ENCODE measurements at regions of chr19 and their contacts with region 1.

Region 1: DNA sequence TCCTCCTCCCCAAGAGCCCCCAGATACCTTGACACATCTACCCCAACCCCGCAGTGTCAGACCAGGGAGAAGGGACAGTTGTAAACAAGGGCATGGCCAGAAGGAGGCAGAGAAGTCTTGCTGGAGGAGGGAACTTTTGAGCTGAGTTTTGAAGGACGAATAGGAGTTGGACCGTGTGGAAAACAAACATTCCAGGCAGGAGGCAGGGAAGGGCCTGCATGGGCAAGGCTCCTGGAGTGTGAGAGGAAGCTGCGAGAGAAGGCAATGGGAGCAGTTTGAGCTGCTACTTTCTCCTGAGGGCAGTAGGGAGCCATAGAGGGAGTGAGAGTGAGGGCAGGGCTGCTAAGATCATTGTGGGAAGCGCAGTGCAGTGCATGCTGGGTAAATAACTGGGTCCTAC is 23.3 kb downstream of the IL12RB1 start:
- DNase-seq: no peak
- ATAC-seq: peak; percentile 59
- H3K4me3 ChIP-seq: no peak overlapping the region
- H3K27ac ChIP-seq: no peak overlapping the region
- H3K4me1 ChIP-seq: no peaks in the 10 kb centered on the region
- H3K27me3 ChIP-seq: no peaks in the 10 kb centered on the region
- CTCF ChIP-seq: peak; percentile 59 to 67 (median 60)
- EP300 ChIP-seq: no peak
- POLR2A ChIP-seq: no peak
- RAD21 ChIP-seq: peak; percentile 74

Region 2: GRCh38 chr19:17922138-17922537 is 141.3 kb before region 1 on chr19:
- CTCF ChIA-PET with region 1: no interaction called
- POLR2A ChIA-PET with region 1: no interaction called
- RAD21 ChIA-PET with region 1: no interaction called
- SMC1A ChIA-PET with region 1: no interaction called
- in situ Hi-C with region 1: no loop called
- intact Hi-C with region 1: no loop called
- DNase-seq: no peak
- ATAC-seq: no peak
- H3K4me3 ChIP-seq: no peak overlapping the region
- H3K27ac ChIP-seq: no peak overlapping the region
- H3K4me1 ChIP-seq: peaks cover 5% of the 10 kb centered on the region
- H3K27me3 ChIP-seq: no peaks in the 10 kb centered on the region
- CTCF ChIP-seq: no peak
- EP300 ChIP-seq: no peak
- POLR2A ChIP-seq: no peak
- RAD21 ChIP-seq: no peak

Region 3: DNA sequence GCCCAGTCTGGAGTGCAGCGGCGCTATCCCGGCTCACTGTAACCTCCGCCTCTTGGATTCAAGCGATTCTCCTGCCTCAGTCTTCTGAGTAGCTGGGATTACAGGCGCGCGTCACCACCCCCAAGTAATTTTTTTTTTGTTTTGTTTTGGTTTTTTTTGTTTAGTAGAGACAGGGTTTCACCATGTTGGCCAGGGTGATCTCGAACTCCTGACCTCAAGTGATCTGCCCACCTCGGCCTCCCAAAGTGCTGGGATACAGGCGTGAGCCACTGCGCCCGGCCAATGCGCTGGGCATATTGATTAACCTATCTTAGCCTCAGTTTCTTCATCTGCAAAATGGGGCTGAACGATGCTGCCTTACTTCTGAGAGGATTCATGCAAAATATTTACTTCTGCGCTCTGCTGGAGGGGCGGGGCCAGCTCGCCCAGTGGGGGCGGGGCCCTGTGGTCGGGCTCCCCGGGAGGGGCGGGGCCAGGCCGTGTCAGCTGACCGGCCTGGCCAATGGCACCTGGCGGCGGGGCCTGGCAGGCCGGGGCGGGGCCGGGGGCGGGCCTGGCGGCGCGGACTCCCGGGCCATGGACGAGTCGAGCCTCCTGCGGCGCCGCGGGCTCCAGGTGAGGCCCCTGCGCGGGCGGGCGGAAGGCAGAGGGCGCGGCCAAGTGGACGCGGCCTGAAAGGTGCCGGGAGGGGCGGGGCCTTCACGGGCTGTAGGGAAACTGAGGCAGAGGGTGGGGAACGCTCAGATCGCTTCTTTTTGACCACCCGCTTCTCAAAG is 33.9 kb after region 1 on chr19 and contains the start of gene MAST3:
- CTCF ChIA-PET with region 1: interaction called, 7 read pairs
- POLR2A ChIA-PET with region 1: interaction called, 3 read pairs
- RAD21 ChIA-PET with region 1: interaction called, 8 read pairs
- SMC1A ChIA-PET with region 1: interaction called, 6 read pairs
- in situ Hi-C with region 1: no loop called
- intact Hi-C with region 1: loop called (anchors 5 kb)
- DNase-seq: peak; percentile 64
- ATAC-seq: peak; percentile 85
- H3K4me3 ChIP-seq: peak within 1 kb of the TSS; percentile 96
- H3K27ac ChIP-seq: peak within 1 kb of the TSS; percentile 87
- H3K4me1 ChIP-seq: peaks cover 11% of the 10 kb centered on the region
- H3K27me3 ChIP-seq: no peaks in the 10 kb centered on the region
- CTCF ChIP-seq: no peak
- EP300 ChIP-seq: no peak
- POLR2A ChIP-seq: peak; percentile 78
- RAD21 ChIP-seq: no peak
- polyA plus RNA-seq, gene MAST3: 3.5 to 8.5 TPM

Region 4: GRCh38 chr19:18152444-18152816 is 89.0 kb after region 1 on chr19:
- CTCF ChIA-PET with region 1: interaction called, 12 read pairs
- POLR2A ChIA-PET with region 1: interaction called, 3 read pairs
- RAD21 ChIA-PET with region 1: interaction called, 7 read pairs
- SMC1A ChIA-PET with region 1: interaction called, 4 read pairs
- in situ Hi-C with region 1: no loop called
- intact Hi-C with region 1: no loop called
- DNase-seq: peak; percentile 99
- ATAC-seq: peak; percentile 85
- H3K4me3 ChIP-seq: peak overlapping the region; percentile 59; the same call in 1 of the 2 replicates
- H3K27ac ChIP-seq: peak overlapping the region; percentile 88
- H3K4me1 ChIP-seq: peaks cover 15% of the 10 kb centered on the region
- H3K27me3 ChIP-seq: no peaks in the 10 kb centered on the region
- CTCF ChIP-seq: peak; percentile 79 to 90 (median 85)
- EP300 ChIP-seq: peak in 1 of 2 experiments; percentile 7; a peak in 1 of 4 replicates
- POLR2A ChIP-seq: peak; percentile 68
- RAD21 ChIP-seq: peak; percentile 46; the same call in 1 of the 2 replicates